Heart right ventricle (tissue), 16 donors: ENCODE measurements at regions of chr19 and their contacts with region 1.

Region 1: DNA sequence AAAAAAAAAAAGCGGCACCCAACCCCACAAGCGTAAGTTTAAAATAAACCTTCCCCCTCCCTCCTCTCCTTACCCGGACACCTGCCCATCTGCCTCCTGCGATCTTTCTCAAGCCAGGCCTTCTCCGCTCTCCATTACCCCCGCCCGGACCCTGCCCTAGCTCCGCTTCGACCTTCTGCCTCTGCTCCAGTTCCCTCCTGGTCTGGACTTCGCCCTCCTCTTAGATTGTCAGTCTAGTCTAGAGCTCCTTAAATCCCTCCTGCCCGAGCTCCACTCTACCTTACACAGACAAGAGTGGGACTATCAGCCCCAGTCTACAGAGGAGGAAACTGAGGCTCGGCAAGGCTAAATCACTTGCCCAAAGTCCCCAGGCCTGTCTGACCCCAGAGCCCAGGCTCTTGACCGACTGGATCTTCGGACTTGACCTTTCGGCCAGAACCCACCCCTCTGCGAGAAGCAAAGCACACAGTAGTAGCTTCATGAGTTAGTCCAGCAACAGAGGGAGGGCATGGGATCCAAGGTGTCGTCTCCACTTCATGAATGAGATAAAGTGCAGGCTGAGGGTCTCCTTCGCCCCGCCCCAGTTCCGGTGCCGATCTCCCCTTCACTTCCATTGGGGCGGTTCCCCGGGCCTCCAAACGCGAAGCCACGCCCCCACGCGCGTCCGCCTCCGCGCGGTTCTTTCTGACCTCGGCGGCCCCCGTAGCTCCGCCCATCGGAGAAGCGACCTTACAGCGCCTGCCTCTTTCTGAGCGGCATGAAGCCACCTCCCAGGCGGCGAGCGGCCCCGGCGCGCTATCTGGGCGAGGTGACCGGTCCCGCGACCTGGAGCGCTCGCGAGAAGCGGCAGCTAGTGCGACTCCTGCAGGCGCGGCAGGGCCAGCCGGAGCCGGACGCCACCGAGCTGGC is at the start of gene SNAPC2:
- DNase-seq: peak; percentile 97
- ATAC-seq: peak; percentile 61 to 78 (median 74)
- H3K4me3 ChIP-seq: peak within 1 kb of the TSS; percentile 55 to 90 (median 76)
- H3K27ac ChIP-seq: peak within 1 kb of the TSS; percentile 66 to 94 (median 88)
- H3K4me1 ChIP-seq: peaks cover 12 to 71% (median 45%) of the 10 kb centered on the region in 9 donors
- H3K27me3 ChIP-seq: peaks cover 11 to 50% (median 43%) of the 10 kb centered on the region in 7 donors
- CTCF ChIP-seq: peak in 2 of 9 donors; percentile 26 to 27
- total RNA-seq, gene SNAPC2: 5.7 to 12.9 (median 9.5) TPM

Region 2: GRCh38 chr19:7858109-7858830 is 61.6 kb before region 1 on chr19:
- intact Hi-C with region 1: loop called in 6 of 10 experiments (anchors 5 to 10 kb)
- DNase-seq: no peak
- ATAC-seq: no peak
- H3K4me3 ChIP-seq: no peak overlapping the region
- H3K27ac ChIP-seq: no peak overlapping the region
- H3K4me1 ChIP-seq: peaks cover 0 to 26% (median 16%) of the 10 kb centered on the region in 9 donors
- H3K27me3 ChIP-seq: peaks cover 0 to 26% (median 14%) of the 10 kb centered on the region in 7 donors
- CTCF ChIP-seq: no peak

Region 3: DNA sequence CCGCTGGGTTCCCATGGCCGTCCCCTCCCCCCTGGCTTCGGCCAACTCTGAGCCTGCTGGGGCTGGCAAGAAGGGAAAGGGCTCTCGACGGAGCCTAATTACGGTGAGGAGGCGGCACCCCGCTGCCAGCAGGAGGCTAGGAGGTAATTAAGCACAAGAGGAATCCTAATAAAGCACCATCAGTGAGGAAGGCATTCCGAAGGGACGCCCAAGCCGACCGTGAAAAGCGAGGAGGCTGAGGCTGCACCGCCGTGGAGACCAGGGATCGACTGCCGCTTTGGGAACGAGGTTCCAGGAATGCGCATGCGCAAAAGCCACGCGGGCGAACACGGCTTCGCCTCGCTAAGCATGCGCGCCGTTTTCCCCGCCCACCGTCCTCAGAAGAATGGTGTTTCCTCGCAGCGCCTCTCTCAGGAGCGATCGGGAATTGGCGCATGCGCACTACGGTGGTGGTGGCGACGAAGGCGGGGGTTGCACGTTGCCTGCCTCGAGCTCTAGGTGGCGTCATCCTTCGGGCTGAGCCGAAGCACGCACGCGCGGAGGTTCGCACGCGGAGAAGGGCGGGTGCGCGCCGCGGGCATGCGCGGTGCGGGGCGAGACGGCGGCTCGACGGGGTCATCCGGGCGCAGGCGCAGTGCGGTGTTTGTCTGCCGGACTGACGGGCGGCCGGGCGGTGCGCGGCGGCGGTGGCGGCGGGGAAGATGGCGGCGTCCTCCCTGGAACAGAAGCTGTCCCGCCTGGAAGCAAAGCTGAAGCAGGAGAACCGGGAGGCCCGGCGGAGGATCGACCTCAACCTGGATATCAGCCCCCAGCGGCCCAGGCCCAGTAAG is 16.4 kb before region 1 on chr19 and contains the start of gene MAP2K7:
- intact Hi-C with region 1: loop called in 1 of 10 experiments (anchors 1 kb)
- DNase-seq: peak; percentile 100
- ATAC-seq: peak; percentile 86 to 96 (median 92)
- H3K4me3 ChIP-seq: peak within 1 kb of the TSS; percentile 78 to 98 (median 88)
- H3K27ac ChIP-seq: peak within 1 kb of the TSS; percentile 72 to 93 (median 85)
- H3K4me1 ChIP-seq: peaks cover 14 to 54% (median 38%) of the 10 kb centered on the region in 9 donors
- H3K27me3 ChIP-seq: peaks cover 0 to 5% (median 0%) of the 10 kb centered on the region in 7 donors
- CTCF ChIP-seq: peak in 8 of 9 donors; percentile 38 to 86 (median 64)
- total RNA-seq, gene MAP2K7: 21.3 to 32.5 (median 24.6) TPM

Region 4: GRCh38 chr19:8005534-8006256 is 85.8 kb after region 1 on chr19 and contains the start of gene ELAVL1:
- intact Hi-C with region 1: no loop called
- DNase-seq: peak; percentile 88 to 93
- ATAC-seq: peak; percentile 90 to 97 (median 94)
- H3K4me3 ChIP-seq: peak within 1 kb of the TSS; percentile 64 to 96 (median 85)
- H3K27ac ChIP-seq: peak within 1 kb of the TSS; percentile 68 to 93 (median 82)
- H3K4me1 ChIP-seq: peaks cover 25 to 51% (median 42%) of the 10 kb centered on the region in 9 donors
- H3K27me3 ChIP-seq: no peaks in the 10 kb centered on the region
- CTCF ChIP-seq: no peak
- total RNA-seq, gene ELAVL1: 44.2 to 60.1 (median 55.3) TPM

Region 5: DNA sequence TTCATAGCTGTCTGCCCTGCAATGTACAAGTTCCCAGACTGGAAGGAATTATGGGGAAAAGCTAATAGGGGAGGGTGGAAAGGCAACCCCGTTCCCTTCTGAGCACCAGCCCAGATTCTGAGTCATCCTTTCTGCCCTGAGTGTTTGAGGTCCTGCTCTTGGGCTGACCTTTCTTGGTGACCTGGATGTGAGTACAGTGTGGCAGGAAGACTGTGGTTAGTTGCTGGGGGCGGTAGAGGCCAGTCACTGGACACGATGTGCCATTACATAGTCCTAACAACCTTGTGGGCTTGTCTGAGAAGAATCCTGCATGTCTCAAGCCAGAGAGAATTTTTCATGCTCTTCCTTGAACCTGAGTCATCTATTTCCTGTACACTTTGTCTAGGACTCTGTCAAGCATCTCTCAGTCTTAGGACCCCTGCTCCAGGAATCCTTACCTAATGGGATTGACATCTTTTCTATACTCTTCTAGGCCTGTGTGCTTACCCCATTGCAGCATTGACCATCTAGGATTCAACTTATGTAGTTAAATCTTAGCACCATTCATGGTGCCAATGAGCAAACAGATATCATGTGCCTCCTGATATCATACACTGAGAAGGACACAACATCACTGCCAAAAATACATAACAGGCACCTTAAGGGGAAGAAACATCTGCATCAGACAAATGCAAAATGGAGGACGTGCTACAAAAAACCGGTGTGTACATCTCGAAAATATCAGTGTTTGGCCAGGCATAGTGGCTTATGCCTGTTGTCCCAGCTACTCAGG is 436.0 kb after region 1 on chr19:
- intact Hi-C with region 1: no loop called
- DNase-seq: no peak
- ATAC-seq: peak in 5 of 8 donors; percentile 40 to 85 (median 55)
- H3K4me3 ChIP-seq: no peak overlapping the region
- H3K27ac ChIP-seq: peak overlapping the region in 1 of 10 donors; percentile 73
- H3K4me1 ChIP-seq: peaks cover 3 to 44% (median 11%) of the 10 kb centered on the region in 9 donors
- H3K27me3 ChIP-seq: peaks cover 0 to 10% (median 0%) of the 10 kb centered on the region in 7 donors
- CTCF ChIP-seq: no peak